ENCODE measurements at regions of chr12 and their contacts with region 1.

Region 1: GRCh38 chr12:6470375-6471163 is at the start of gene VAMP1:
- DNase-seq: peak; percentile 83
- ATAC-seq: peak; percentile 98
- H3K4me3 ChIP-seq: peak within 1 kb of the TSS; percentile 70 to 78
- H3K27ac ChIP-seq: peak within 1 kb of the TSS; percentile 89
- H3K4me1 ChIP-seq: peaks cover 14% of the 10 kb centered on the region
- H3K27me3 ChIP-seq: no peaks in the 10 kb centered on the region
- CTCF ChIP-seq: no peak
- total RNA-seq, gene VAMP1: 11.2 TPM

Region 2: GRCh38 chr12:6326336-6326838 is 144.2 kb before region 1 on chr12:
- CTCF ChIA-PET with region 1: interaction called, 7 read pairs
- POLR2A ChIA-PET with region 1: no interaction called
- in situ Hi-C with region 1: no loop called
- intact Hi-C with region 1: loop called (anchors 5 kb)
- DNase-seq: no peak
- ATAC-seq: peak; percentile 68
- H3K4me3 ChIP-seq: no peak overlapping the region
- H3K27ac ChIP-seq: peak overlapping the region; percentile 42
- H3K4me1 ChIP-seq: peaks cover 55% of the 10 kb centered on the region
- H3K27me3 ChIP-seq: no peaks in the 10 kb centered on the region
- CTCF ChIP-seq: peak; percentile 73

Region 3: DNA sequence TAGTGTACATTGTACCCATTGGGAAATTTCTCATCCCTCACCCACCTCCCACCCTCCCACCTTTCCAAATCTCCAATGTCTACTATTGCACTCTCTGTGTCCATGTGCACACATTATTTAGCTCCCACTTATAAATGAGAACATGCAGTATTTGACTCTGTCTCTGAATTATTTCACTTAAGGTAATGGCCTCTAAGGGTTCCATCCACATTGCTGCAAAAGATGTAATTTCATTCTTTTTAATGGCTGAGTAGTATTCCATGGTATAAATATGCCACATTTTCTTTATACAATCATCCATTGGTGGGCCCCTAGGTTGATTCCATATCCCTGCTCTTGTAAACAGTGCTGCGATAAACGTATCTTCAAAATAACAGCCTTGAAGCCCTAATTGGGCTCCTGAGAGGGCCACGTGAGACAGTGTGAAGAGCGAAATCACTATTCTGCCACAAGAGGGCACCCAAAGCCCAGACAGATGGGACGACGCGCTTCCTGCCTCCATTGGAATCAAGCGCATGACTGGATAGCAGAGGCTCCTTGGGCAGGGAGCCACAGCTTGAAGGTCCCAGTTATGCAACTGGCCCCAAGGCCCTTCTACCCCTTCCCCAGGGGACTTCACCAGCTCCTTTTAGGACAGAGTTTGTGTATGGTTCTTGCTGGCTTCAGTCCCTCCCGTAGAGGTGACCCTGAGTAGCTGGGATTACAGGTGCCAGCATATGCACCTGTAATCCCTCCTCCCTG is 47.1 kb before region 1 on chr12:
- CTCF ChIA-PET with region 1: no interaction called
- POLR2A ChIA-PET with region 1: no interaction called
- in situ Hi-C with region 1: no loop called
- intact Hi-C with region 1: loop called (anchors 1 kb)
- DNase-seq: peak; percentile 56
- ATAC-seq: peak; percentile 99
- H3K4me3 ChIP-seq: no peak overlapping the region
- H3K27ac ChIP-seq: no peak overlapping the region
- H3K4me1 ChIP-seq: no peaks in the 10 kb centered on the region
- H3K27me3 ChIP-seq: no peaks in the 10 kb centered on the region
- CTCF ChIP-seq: peak; percentile 83

Region 4: GRCh38 chr12:6493497-6494257 is 23.1 kb after region 1 on chr12 and contains the start of gene NCAPD2:
- CTCF ChIA-PET with region 1: no interaction called
- POLR2A ChIA-PET with region 1: interaction called, 11 read pairs
- in situ Hi-C with region 1: no loop called
- intact Hi-C with region 1: no loop called
- DNase-seq: peak; percentile 68
- ATAC-seq: peak; percentile 93
- H3K4me3 ChIP-seq: peak within 1 kb of the TSS; percentile 94 to 95
- H3K27ac ChIP-seq: peak within 1 kb of the TSS; percentile 98
- H3K4me1 ChIP-seq: peaks cover 17% of the 10 kb centered on the region
- H3K27me3 ChIP-seq: no peaks in the 10 kb centered on the region
- CTCF ChIP-seq: no peak
- total RNA-seq, gene NCAPD2: 80.3 TPM